Posterior vena cava (tissue), 2 donors: ENCODE measurements at regions of chr4 and their contacts with region 1.

Region 1: GRCh38 chr4:64489628-64490027 is 80.4 kb upstream of the TECRL start:
- DNase-seq: no peak

Region 2: GRCh38 chr4:66340286-66340893 is 1850.8 kb after region 1 on chr4:
- intact Hi-C with region 1: loop called in 1 of 2 experiments (anchors 10 kb)
- DNase-seq: no peak